PC-9 (cell line): ENCODE measurements at regions of chr5 and their contacts with region 1.

Region 1: DNA sequence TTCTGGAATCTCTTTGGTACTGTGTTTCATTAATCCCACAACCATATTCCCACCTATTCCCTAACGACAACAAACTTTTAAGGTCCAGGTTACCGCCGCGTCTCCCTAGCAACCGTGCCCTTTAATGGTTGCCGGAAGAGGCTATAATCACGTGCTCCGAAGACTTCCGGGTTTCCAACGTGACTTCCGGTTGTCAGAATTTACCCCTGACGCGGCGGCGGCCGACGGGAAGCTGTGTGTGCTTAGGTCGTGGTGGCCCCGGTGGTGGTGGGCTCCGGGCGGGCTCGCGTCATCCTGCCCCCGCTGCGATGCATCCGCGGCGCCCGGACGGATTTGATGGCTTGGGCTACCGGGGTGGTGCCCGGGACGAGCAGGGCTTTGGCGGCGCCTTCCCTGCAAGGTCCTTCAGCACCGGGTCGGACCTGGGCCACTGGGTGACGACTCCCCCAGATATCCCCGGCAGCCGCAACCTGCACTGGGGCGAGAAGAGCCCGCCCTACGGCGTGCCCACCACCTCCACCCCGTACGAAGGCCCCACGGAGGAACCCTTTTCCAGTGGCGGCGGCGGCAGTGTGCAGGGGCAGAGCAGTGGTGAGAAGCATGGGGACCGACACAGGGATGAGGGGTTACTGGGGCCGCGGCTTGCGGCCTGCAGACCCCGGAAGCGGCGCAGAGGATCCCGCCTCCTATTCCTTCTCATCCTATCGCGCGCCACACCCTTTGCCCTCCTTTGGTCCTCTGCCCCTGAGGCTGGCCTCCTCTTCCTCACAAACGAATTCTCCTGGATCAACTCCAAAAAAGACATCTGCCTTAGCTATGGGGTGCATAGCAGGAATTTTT is at the start of gene SLC25A46:
- DNase-seq: peak; percentile 70 to 78
- H3K4me3 ChIP-seq: peak within 1 kb of the TSS; percentile 76
- H3K27ac ChIP-seq: peak within 1 kb of the TSS; percentile 51
- H3K4me1 ChIP-seq: peaks cover 26% of the 10 kb centered on the region; the same call in 1 of the 2 replicates
- H3K27me3 ChIP-seq: no peaks in the 10 kb centered on the region
- CTCF ChIP-seq: no peak
- total RNA-seq, gene SLC25A46: 19.0 and 29.0 TPM in 2 replicates

Region 2: DNA sequence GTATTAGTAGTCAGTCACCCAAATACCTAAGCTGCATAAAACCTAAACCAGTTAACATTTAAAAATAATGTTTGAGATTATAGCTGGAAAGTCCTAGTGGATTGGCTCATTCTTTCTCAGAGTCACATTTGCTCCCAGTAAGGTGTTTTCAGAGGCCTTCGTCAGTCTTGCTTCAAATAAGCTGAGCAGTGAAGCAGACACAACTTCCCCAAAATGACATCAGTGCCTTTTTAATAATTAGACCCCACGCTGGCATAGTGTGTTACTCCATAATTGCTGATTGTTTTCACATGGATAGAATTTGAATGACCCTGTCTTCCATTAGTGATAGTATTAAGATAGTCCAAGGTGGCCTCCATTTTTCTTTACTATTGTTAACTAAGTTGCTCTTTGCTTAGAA is 1575.0 kb before region 1 on chr5:
- CTCF ChIA-PET with region 1: no interaction called
- POLR2A ChIA-PET with region 1: no interaction called
- intact Hi-C with region 1: no loop called
- DNase-seq: no peak
- H3K4me3 ChIP-seq: no peak overlapping the region
- H3K27ac ChIP-seq: no peak overlapping the region
- H3K4me1 ChIP-seq: no peaks in the 10 kb centered on the region
- H3K27me3 ChIP-seq: no peaks in the 10 kb centered on the region
- CTCF ChIP-seq: no peak

Region 3: DNA sequence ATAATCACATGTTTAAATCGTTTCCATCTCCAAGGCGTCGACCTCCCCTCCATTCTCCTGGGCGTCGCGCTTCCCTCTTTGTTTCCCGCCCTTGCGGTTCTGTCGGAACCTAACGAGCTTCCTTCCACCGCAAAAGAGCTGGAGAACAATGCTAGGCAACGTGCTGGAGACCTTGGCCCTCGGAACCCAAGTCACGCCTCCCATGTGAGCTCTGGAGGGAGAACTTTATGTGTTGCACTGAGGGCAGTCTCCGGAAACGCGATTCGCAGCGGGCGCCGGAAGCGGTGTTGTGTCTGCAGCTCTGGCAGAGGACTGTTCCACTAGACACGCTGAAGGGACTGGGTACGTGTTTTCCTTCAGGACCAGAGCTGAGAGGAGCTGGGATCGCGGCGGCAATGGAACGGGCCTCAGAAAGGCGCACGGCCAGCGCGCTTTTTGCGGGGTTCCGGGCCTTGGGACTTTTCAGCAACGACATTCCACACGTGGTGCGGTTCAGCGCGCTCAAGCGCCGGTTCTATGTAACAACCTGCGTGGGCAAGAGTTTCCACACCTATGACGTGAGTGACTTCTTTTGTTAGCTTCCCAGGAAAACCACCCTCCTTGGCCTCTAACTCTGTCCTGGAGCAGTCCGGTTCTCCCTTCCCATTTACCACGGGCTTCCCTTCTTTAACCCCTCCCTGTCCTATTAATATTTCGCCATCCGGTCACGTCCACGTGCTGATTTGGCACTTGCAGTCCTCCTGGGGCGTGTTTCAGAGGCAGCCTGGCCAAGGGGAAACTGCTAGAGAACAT is 353.2 kb after region 1 on chr5 and contains the start of gene WDR36:
- CTCF ChIA-PET with region 1: no interaction called
- POLR2A ChIA-PET with region 1: no interaction called
- intact Hi-C with region 1: loop called (anchors 2 kb)
- DNase-seq: peak; percentile 75 to 85
- H3K4me3 ChIP-seq: peak within 1 kb of the TSS; percentile 94
- H3K27ac ChIP-seq: peak within 1 kb of the TSS; percentile 35; the same call in 1 of the 2 replicates
- H3K4me1 ChIP-seq: peaks cover 20% of the 10 kb centered on the region
- H3K27me3 ChIP-seq: no peaks in the 10 kb centered on the region
- CTCF ChIP-seq: no peak
- total RNA-seq, gene WDR36: 17.7 and 18.5 TPM in 2 replicates

Region 4: GRCh38 chr5:111187079-111187478 is 448.0 kb after region 1 on chr5:
- CTCF ChIA-PET with region 1: no interaction called
- POLR2A ChIA-PET with region 1: no interaction called
- intact Hi-C with region 1: no loop called
- DNase-seq: no peak
- H3K4me3 ChIP-seq: no peak overlapping the region
- H3K27ac ChIP-seq: no peak overlapping the region
- H3K4me1 ChIP-seq: no peaks in the 10 kb centered on the region
- H3K27me3 ChIP-seq: no peaks in the 10 kb centered on the region
- CTCF ChIP-seq: no peak